Activated naive CD4-positive, alpha-beta T cell treated with anti-CD3 and anti-CD28 coated beads, Interleukin-2, amount 10 ng/mL, durations not matched to agents 7 days and 5 days (primary cell): ENCODE measurements at regions of chr2 and their contacts with region 1.

Region 1: GRCh38 chr2:225282858-225283710 is 116.4 kb upstream of the NYAP2 start:
- DNase-seq: peak; percentile 29
- H3K4me3 Mint-ChIP-seq: no peak overlapping the region
- H3K27ac Mint-ChIP-seq: no peak overlapping the region
- H3K4me1 Mint-ChIP-seq: no peaks in the 10 kb centered on the region
- H3K27me3 Mint-ChIP-seq: peaks cover 5% of the 10 kb centered on the region

Region 2: GRCh38 chr2:224347176-224348051 is 935.7 kb before region 1 on chr2:
- CTCF ChIA-PET with region 1: no interaction called
- DNase-seq: no peak
- H3K4me3 Mint-ChIP-seq: no peak overlapping the region
- H3K27ac Mint-ChIP-seq: no peak overlapping the region
- H3K4me1 Mint-ChIP-seq: no peaks in the 10 kb centered on the region
- H3K27me3 Mint-ChIP-seq: peaks cover 10% of the 10 kb centered on the region

Region 3: GRCh38 chr2:225296951-225297350 is 13.9 kb after region 1 on chr2:
- CTCF ChIA-PET with region 1: no interaction called
- DNase-seq: no peak
- H3K4me3 Mint-ChIP-seq: no peak overlapping the region
- H3K27ac Mint-ChIP-seq: no peak overlapping the region
- H3K4me1 Mint-ChIP-seq: no peaks in the 10 kb centered on the region
- H3K27me3 Mint-ChIP-seq: no peaks in the 10 kb centered on the region

Region 4: DNA sequence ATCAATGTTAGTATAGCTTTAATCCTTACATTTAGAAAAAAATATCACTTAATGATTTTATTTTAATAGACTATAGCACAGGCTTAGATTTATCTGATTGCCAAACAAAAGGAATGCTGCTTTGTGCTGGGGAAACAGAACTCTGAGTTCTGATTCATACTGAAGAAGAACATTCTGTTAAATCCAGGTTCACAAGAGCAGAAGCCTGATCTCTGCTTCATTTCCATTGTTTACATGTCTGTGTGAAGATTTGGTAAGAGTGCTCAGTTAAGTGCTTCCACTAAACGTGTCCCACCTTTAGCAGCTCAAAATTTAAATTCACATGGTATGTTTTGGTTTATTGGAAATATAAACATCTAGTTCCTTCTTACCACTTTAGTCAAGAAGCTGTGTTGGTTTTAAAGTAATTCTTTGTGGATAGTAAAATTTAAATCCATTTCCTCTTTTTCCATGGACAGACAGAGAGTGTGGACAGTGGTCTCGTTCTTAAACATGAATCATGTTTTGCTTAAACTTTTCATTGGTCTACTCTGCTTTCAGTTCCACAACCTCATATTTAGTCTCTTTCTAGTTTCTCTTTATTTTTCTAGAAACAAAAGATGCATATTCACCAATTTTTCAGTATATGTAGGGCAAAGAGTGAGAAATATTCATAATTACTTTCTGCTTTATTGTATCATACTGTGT is 175.5 kb after region 1 on chr2:
- CTCF ChIA-PET with region 1: no interaction called
- DNase-seq: no peak
- H3K4me3 Mint-ChIP-seq: no peak overlapping the region
- H3K27ac Mint-ChIP-seq: no peak overlapping the region
- H3K4me1 Mint-ChIP-seq: no peaks in the 10 kb centered on the region
- H3K27me3 Mint-ChIP-seq: peaks cover 5% of the 10 kb centered on the region

Region 5: DNA sequence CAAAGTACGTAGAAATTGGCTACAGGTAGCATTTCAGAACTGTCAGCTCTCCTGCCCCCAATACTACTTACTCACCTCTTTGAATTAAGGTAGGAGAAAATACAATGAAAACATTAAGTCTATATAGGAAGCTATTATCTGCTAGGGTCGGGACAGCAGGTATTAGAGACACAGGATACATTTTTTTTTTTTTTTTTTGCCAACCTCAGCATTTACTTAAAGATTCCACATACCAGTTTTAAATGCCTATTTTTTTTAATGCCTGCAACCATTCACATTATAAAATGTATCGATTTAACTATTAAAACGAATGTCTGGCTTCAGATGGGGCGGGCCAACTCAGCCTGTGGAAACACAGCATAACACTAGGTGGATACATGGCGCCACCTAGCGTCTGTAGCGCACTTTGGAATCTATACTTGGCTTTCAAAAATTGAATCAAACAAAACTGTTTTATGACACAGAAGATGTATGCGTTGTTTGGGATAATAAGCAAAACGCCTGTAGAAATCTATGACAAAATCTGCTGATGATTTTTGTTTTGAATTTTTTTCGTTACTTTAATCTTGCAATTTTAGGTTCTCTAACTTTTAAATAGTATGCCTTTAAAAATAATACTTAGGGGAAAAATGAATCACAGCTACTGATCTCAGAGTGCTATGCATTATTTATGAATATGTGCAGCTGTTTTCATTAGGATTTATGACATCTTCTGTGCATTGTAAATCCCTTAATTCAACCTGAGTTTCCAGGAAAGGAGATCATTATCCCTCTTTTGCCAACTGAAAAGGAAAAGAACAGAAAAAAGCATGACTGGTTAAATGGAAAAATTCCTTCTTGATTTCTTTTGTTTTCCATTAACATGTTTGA is 377.4 kb after region 1 on chr2:
- CTCF ChIA-PET with region 1: interaction called, 45 read pairs
- DNase-seq: peak; percentile 84
- H3K4me3 Mint-ChIP-seq: no peak overlapping the region
- H3K27ac Mint-ChIP-seq: no peak overlapping the region
- H3K4me1 Mint-ChIP-seq: no peaks in the 10 kb centered on the region
- H3K27me3 Mint-ChIP-seq: peaks cover 8% of the 10 kb centered on the region